ENCODE measurements at regions of chrX and their contacts with region 1.

Region 1: GRCh38 chrX:65601530-65602220 is 65.8 kb upstream of the MSN start:
- DNase-seq: peak; percentile 76 to 88
- ATAC-seq: peak; percentile 95 to 98 (median 97)
- H3K4me3 ChIP-seq: no peak overlapping the region
- H3K27ac ChIP-seq: peak overlapping the region; percentile 73 to 92 (median 88)
- H3K4me1 ChIP-seq: peaks cover 4 to 54% (median 32%) of the 10 kb centered on the region in 9 donors
- H3K27me3 ChIP-seq: peaks cover 0 to 29% (median 0%) of the 10 kb centered on the region in 7 donors
- CTCF ChIP-seq: peak in 5 of 9 donors; percentile 19 to 31 (median 25)

Region 2: DNA sequence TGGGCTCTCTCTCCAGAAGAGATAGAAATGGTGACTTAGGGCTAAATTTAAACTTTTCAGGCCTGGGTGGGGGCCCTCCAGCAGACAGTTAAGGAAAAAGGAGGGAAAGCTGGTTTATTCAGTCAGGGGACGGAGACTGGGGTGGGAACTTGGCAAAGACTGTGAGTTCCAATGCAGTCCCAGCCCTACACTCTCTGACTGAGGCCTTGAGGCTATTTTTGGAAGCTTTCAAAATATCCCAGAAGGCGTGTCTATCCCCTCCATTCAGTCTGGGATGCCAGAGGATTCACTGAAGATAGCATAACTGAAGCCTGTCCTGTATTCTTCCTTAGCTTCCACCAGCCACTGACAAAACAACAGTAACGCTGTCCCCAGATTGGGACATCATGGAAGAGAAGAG is 33.7 kb after region 1 on chrX:
- intact Hi-C with region 1: loop called in 5 of 10 experiments (anchors 5 kb)
- DNase-seq: peak in 1 of 2 donors; percentile 52
- ATAC-seq: peak; percentile 92 to 98 (median 96)
- H3K4me3 ChIP-seq: no peak overlapping the region
- H3K27ac ChIP-seq: peak overlapping the region; percentile 34 to 90 (median 78)
- H3K4me1 ChIP-seq: peaks cover 4 to 29% (median 17%) of the 10 kb centered on the region in 9 donors
- H3K27me3 ChIP-seq: peaks cover 0 to 16% (median 0%) of the 10 kb centered on the region in 7 donors
- CTCF ChIP-seq: no peak

Region 3: DNA sequence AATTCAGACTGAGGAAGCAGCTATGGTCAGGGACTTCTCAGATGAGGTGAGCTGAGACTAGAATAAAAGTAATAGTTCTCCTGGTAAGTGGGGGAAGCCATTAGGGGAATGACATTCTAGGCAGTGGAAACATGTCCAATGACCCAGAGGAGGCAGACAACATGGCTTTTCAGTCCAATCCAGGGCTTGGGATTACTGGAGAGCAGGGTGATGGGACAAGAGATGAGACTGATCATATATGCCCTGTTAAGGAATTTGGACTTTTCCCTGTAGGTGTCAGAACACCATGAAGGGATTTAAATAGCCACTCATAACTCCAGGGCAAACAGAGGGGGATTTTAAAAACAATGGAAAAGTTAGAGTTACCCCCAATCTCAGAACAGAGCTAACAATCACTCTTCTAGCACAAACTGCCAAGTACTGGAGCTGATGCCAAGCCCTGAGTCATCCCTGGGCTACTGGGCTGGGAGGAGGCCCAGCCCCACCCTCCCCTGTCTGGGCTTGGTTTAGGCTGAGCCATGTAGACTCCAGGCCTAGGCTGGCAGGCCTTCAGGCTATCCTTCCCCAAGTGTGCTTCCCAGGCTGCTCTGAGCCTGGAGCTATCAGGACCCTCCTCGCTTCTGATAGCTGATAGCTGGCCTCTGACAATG is 43.1 kb after region 1 on chrX:
- intact Hi-C with region 1: loop called in 5 of 10 experiments (anchors 5 kb)
- DNase-seq: peak; percentile 75 to 83
- ATAC-seq: peak; percentile 96 to 99 (median 98)
- H3K4me3 ChIP-seq: no peak overlapping the region
- H3K27ac ChIP-seq: peak overlapping the region; percentile 16 to 83 (median 68)
- H3K4me1 ChIP-seq: peaks cover 0 to 36% (median 29%) of the 10 kb centered on the region in 9 donors
- H3K27me3 ChIP-seq: peaks cover 0 to 14% (median 0%) of the 10 kb centered on the region in 7 donors
- CTCF ChIP-seq: no peak

Region 4: DNA sequence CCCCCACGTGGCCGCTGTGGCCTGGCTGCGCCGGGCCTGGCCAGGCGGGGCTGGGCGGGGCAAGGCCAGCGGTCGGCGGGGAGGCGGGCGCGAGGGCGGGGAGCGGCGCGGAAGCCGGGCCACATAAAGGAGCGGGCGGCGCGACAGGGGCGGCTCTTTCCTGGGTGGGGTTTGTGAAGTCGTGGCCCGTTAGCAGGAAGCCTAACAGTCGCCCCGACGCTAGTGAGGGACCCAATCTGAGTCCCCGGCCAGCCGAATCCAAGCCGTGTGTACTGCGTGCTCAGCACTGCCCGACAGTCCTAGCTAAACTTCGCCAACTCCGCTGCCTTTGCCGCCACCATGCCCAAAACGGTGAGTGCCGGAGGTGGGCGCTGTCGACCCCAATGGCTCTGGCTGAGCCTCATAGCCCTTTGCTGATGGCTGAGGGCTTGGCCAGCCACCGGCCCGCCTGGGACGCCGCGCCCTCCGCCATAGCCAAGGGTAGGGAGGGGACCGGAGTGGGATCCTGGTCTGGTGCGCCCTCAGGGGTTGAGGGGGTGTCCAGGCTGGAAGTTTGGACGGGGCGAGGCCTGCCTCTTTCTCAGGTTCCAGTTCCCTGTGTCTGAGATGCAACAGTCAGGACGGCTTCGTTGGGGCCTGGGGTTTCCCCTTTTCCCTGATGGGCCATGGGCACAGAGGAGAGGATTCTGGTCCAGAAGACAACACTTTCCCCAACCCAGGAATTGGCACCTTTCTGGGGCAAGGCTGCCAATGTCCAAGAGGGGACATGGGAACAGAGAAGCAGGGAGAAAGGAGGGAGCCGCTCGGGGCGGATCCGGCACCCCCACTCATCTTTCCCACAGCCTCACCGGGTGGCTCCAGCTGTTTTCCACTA is 66.1 kb after region 1 on chrX and contains the start of gene MSN:
- intact Hi-C with region 1: loop called in 5 of 10 experiments (anchors 2 to 5 kb)
- DNase-seq: peak; percentile 79 to 84
- ATAC-seq: peak; percentile 86 to 95 (median 90)
- H3K4me3 ChIP-seq: peak within 1 kb of the TSS; percentile 53 to 89 (median 78)
- H3K27ac ChIP-seq: peak within 1 kb of the TSS; percentile 90 to 100 (median 97)
- H3K4me1 ChIP-seq: peaks cover 2 to 42% (median 32%) of the 10 kb centered on the region in 9 donors
- H3K27me3 ChIP-seq: peaks cover 0 to 13% (median 0%) of the 10 kb centered on the region in 7 donors
- CTCF ChIP-seq: peak in 3 of 9 donors; percentile 9 to 21 (median 14)
- total RNA-seq, gene MSN: 106 to 238 (median 120) TPM

Region 5: GRCh38 chrX:65706041-65706828 is 104.6 kb after region 1 on chrX:
- intact Hi-C with region 1: loop called in 6 of 10 experiments (anchors 2 to 5 kb)
- DNase-seq: peak; percentile 22 to 59
- ATAC-seq: peak; percentile 47 to 93 (median 80)
- H3K4me3 ChIP-seq: no peak overlapping the region
- H3K27ac ChIP-seq: peak overlapping the region; percentile 58 to 85 (median 78)
- H3K4me1 ChIP-seq: peaks cover 2 to 87% (median 57%) of the 10 kb centered on the region in 9 donors
- H3K27me3 ChIP-seq: no peaks in the 10 kb centered on the region
- CTCF ChIP-seq: no peak

Region 6: GRCh38 chrX:65772842-65773241 is 171.2 kb after region 1 on chrX:
- intact Hi-C with region 1: no loop called
- DNase-seq: no peak
- ATAC-seq: peak in 1 of 8 donors; percentile 91
- H3K4me3 ChIP-seq: no peak overlapping the region
- H3K27ac ChIP-seq: no peak overlapping the region
- H3K4me1 ChIP-seq: no peaks in the 10 kb centered on the region
- H3K27me3 ChIP-seq: peaks cover 0 to 66% (median 0%) of the 10 kb centered on the region in 7 donors
- CTCF ChIP-seq: no peak

Measured in heart right ventricle (tissue), 16 donors.